Prostate gland (tissue), 2 donors: ENCODE measurements at regions of chr5 and their contacts with region 1.

Region 1: DNA sequence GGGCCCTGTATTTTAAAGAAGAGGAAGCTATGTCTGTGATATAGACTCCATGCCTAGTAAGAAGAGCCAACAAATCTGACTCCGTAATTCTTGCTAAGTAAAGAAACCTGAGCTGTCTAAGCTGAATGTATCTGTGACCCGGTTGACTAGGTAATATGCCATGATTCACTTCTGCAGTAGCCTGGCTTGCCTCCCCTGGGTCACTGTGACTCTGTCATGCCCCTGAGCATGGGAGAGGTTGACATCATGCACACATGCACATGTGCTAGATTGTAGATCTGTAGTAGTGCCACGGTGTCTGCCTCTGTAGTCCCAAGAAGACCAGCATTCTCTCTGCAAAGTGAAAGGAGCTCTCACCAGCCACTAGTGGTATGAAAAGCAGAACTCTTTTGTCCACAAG is 9.1 kb downstream of the SLC22A5 start:
- DNase-seq: no peak
- H3K4me3 ChIP-seq: no peak overlapping the region
- H3K27ac ChIP-seq: peak overlapping the region; percentile 38 to 72
- H3K4me1 ChIP-seq: peaks cover 23% of the 10 kb centered on the region
- H3K27me3 ChIP-seq: no peaks in the 10 kb centered on the region
- CTCF ChIP-seq: no peak
- POLR2A ChIP-seq: peak; percentile 17

Region 2: DNA sequence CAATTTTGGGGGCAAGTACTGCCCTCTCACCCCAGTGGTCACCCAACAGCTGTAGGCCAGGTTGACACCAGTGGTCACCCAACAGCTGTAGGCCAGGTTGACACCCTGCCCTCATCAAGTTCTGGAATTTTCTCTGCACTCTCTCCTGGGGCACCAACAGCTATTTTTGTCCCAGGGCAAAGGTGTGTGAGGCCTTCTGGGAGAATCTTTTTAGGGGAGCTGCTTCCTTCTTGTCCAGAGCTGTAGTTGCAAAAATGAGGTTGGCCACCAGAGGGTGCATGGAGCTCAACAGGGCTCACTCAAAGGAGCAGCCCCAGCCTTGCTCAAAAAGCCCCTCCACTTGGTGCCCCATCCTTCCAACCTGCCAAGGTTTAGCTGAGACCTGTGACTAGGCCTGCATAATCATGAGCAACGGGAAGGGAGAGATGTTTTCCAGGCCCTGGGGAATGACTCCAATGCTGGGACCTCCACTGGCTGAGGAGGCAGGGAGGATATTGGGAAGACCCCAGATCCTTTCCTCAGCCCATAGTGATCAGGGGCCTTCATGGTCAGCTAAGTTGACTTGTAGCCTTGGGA is 140.3 kb before region 1 on chr5:
- intact Hi-C with region 1: loop called (anchors 5 kb)
- DNase-seq: peak; percentile 67
- H3K4me3 ChIP-seq: no peak overlapping the region
- H3K27ac ChIP-seq: no peak overlapping the region
- H3K4me1 ChIP-seq: no peaks in the 10 kb centered on the region
- H3K27me3 ChIP-seq: no peaks in the 10 kb centered on the region
- CTCF ChIP-seq: peak; percentile 61 to 81 (median 72)
- POLR2A ChIP-seq: no peak